K562 (cell line): ENCODE measurements at regions of chr11 and their contacts with region 1.

Region 1: GRCh38 chr11:6682936-6683861 is at the start of gene MRPL17:
- DNase-seq: peak; percentile 96 to 99 (median 97)
- ATAC-seq: peak; percentile 94
- H3K4me3 ChIP-seq: peak within 1 kb of the TSS; percentile 68
- H3K27ac ChIP-seq: peak within 1 kb of the TSS; percentile 80
- H3K4me1 ChIP-seq: peaks cover 10 to 14% of the 10 kb centered on the region in 2 experiments; a peak in 4 of 5 replicates
- H3K27me3 ChIP-seq: no peaks in the 10 kb centered on the region
- CTCF ChIP-seq: peak; percentile 92 to 96 (median 93)
- EP300 ChIP-seq: peak; percentile 45; the same call in 1 of the 2 replicates
- POLR2A ChIP-seq: peak; percentile 99
- RAD21 ChIP-seq: peak; percentile 85 to 93
- polyA plus RNA-seq, gene MRPL17: 78.9 to 81.6 TPM

Region 2: GRCh38 chr11:6556139-6556949 is 126.9 kb before region 1 on chr11:
- CTCF ChIA-PET with region 1: no interaction called
- POLR2A ChIA-PET with region 1: no interaction called
- in situ Hi-C with region 1: no loop called
- intact Hi-C with region 1: loop called (anchors 1 kb)
- DNase-seq: no peak
- ATAC-seq: no peak
- H3K4me3 ChIP-seq: no peak overlapping the region
- H3K27ac ChIP-seq: peak overlapping the region; percentile 58
- H3K4me1 ChIP-seq: peaks cover 23% of the 10 kb centered on the region in 2 experiments
- H3K27me3 ChIP-seq: no peaks in the 10 kb centered on the region
- CTCF ChIP-seq: no peak
- EP300 ChIP-seq: no peak
- POLR2A ChIP-seq: no peak
- RAD21 ChIP-seq: no peak

Region 3: DNA sequence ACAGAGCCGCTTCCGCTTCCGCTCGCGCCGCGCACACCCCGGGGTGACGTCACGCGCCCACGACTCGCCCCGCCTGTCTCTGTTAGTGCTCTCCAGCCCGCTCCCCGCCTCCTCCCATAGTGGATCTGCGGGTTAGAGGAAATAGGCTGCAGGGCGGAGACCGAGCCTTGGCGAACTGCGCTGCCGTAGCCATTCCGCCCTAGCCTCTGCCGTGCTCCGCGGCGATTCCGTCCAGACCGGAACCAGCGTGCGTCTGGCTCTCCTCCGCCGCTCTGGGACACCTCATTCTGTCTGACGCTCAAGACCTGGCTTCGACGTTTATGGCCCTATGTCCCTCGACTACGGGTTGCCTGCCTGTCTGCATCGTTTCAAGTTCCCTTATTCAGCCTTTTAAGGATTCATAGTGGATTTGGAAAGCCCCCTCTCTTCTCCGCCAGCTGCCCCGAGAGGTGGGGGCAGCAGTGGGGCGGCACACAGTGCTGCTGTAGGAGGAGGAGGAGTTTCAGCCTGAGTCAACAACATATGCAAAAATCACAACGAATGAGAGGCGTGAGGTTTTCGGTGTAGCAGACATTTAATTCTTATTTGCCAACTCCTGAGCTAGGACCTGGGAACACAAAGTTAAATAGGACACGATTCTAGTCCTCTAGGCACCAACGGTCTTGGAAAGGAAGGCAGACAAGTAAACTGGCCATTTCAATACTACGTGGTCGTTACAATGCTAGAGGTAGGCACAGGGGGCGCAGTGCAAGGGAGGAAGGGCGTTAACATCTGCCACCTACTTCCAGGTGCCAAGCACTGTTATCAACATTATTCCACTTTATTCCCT is 70.8 kb before region 1 on chr11 and contains the start of gene TAF10:
- CTCF ChIA-PET with region 1: no interaction called
- POLR2A ChIA-PET with region 1: interaction called, 6 read pairs
- in situ Hi-C with region 1: no loop called
- intact Hi-C with region 1: loop called (anchors 2 kb)
- DNase-seq: peak; percentile 92 to 96 (median 94)
- ATAC-seq: peak; percentile 94
- H3K4me3 ChIP-seq: peak within 1 kb of the TSS; percentile 81
- H3K27ac ChIP-seq: peak within 1 kb of the TSS; percentile 96
- H3K4me1 ChIP-seq: peaks cover 20 to 26% of the 10 kb centered on the region in 2 experiments
- H3K27me3 ChIP-seq: no peaks in the 10 kb centered on the region
- CTCF ChIP-seq: peak; percentile 53 to 70 (median 59); a peak in 5 of 6 replicates
- EP300 ChIP-seq: peak; percentile 15; the same call in 1 of the 2 replicates
- POLR2A ChIP-seq: peak; percentile 96
- RAD21 ChIP-seq: peak; percentile 24 to 30; a peak in 3 of 4 replicates
- polyA plus RNA-seq, gene TAF10: 19.5 to 28.2 TPM

Region 4: DNA sequence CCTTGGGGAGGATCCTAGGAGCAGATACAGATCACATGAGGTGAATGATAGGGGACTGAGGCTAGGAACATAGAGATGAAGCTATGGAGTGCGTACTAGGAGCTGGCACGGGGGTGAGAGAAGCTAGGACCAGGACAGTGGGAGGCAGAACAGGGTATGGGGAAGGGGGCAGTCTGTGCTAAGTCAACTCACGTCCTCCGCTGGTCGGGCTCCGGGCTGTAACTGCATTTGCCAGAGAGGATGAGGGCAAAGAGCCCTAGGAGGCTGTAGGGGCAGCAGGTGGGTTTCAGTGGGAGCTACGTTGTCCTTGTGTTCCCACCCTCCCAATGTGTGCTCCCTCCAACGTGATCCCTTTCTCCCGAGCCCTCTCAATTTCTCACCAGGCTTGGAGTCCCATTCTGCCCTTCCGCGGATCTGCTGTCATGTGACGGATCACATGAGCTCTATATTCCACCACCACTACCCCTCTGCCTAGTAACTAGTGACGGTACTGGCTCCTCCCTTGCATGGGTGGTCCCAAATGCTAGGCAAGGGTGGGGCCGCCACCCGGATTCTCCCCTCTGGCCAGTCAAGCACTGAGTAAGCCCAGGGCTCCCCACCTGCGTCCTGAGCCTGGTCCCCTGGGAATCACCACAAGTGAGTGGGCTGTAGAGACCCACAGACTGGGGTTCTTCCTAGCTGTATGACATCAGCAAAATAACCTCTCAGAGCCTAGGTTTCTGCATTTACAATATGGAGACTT is 64.0 kb before region 1 on chr11 and contains the start of gene TPP1:
- CTCF ChIA-PET with region 1: no interaction called
- POLR2A ChIA-PET with region 1: interaction called, 4 read pairs
- in situ Hi-C with region 1: loop called (anchors 5 kb)
- intact Hi-C with region 1: no loop called
- DNase-seq: peak; percentile 92 to 97 (median 94)
- ATAC-seq: peak; percentile 97
- H3K4me3 ChIP-seq: peak within 1 kb of the TSS; percentile 71
- H3K27ac ChIP-seq: peak within 1 kb of the TSS; percentile 86
- H3K4me1 ChIP-seq: peaks cover 8 to 36% of the 10 kb centered on the region in 2 experiments
- H3K27me3 ChIP-seq: peaks cover 0 to 9% of the 10 kb centered on the region in 2 experiments; a peak in 1 of 5 replicates
- CTCF ChIP-seq: no peak
- EP300 ChIP-seq: no peak; the same call in 1 of the 2 replicates
- POLR2A ChIP-seq: peak; percentile 78
- RAD21 ChIP-seq: 0 out of 4 replicates have a peak, but pooled peaks of 1 of the 2 experiments have one; percentile 3
- polyA plus RNA-seq, gene TPP1: 9.4 to 15.7 TPM

Region 5: DNA sequence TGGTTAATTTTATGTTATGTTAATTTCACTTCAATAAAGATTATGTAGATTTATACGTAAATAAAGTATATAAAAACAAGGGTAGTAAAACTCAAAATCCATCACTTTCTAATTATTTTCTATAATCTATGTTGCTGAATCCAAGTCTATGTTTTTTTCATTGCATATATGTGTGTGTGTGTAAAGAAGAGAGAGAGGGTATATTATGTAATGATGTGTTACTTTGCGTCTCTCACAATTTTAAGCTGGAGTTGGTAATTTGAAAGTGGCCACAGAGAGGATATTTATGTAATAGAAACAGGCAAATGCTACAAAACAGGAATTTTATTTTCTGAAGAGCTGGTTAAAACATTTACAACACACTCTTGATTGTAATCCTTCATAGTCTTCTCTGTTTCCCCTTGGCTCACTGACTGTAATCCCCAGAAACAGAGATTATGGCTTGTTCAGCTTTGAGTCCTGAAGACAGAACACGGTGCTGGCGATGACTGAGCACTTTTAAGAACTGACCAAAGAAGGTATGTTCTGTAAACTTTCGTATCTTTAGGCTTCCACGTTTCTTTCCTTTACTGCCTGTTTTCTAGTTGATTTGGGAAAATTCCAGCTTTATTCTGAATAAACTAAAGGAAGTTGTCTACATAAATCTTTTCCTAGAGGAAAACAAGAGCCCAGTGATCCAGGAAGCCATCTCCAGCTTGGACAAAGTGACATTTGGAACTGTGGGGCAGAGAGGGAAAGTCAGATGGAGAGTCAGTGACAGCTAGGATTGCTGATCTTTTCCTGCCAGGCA is 45.0 kb after region 1 on chr11:
- CTCF ChIA-PET with region 1: no interaction called
- POLR2A ChIA-PET with region 1: no interaction called
- in situ Hi-C with region 1: no loop called
- intact Hi-C with region 1: no loop called
- DNase-seq: peak in 2 of 4 experiments; percentile 70 to 80
- ATAC-seq: peak; percentile 99
- H3K4me3 ChIP-seq: no peak overlapping the region
- H3K27ac ChIP-seq: peak overlapping the region; percentile 57
- H3K4me1 ChIP-seq: peaks cover 0 to 7% of the 10 kb centered on the region in 2 experiments; a peak in 2 of 5 replicates
- H3K27me3 ChIP-seq: no peaks in the 10 kb centered on the region
- CTCF ChIP-seq: no peak
- EP300 ChIP-seq: no peak
- POLR2A ChIP-seq: no peak
- RAD21 ChIP-seq: no peak

Region 6: DNA sequence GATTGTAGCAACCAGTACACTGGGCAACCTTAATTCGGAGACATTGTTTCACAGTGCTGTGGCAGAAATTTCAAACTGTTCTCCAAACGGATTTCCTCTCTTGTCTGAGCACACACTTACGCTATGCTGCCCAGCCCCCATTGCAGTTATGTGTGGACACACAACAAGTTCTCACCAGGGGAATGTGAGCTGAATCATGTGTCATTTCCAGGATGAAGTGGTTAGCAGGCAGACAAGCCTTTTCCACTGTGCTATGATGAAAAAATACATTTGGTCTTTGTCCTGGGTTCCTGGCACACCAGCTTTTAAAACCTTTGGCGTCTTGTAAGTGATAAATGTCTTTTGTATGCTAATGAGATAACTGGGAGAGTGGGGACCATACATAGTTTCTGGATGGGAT is 521.6 kb after region 1 on chr11:
- CTCF ChIA-PET with region 1: no interaction called
- POLR2A ChIA-PET with region 1: no interaction called
- in situ Hi-C with region 1: no loop called
- intact Hi-C with region 1: no loop called
- DNase-seq: no peak
- ATAC-seq: no peak
- H3K4me3 ChIP-seq: no peak overlapping the region
- H3K27ac ChIP-seq: no peak overlapping the region
- H3K4me1 ChIP-seq: no peaks in the 10 kb centered on the region
- H3K27me3 ChIP-seq: no peaks in the 10 kb centered on the region
- CTCF ChIP-seq: no peak
- EP300 ChIP-seq: no peak
- POLR2A ChIP-seq: no peak
- RAD21 ChIP-seq: no peak